AG04450 (cell line): ENCODE measurements at regions of chr13 and their contacts with region 1.

Region 1: DNA sequence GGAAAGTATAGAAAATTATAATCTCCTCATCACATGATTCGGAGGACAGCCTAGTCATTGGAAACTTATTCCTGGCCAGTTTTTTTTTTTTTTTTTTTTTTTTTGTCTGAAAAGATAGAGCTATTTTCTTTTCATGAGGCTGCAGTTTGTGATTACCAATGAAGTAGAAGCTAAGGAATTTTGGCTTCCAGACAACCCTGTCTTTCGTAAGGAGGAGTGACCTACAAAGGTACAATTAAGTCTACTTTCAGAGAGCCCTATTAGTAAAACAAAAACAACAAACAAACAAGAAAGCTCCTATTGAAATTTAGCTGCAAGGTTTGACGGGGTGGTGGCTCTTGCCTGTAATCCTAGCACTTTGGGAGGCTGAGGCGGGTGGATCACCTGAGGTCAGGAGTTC is 304.4 kb upstream of the ARGLU1 start:
- DNase-seq: no peak
- H3K4me3 ChIP-seq: no peak overlapping the region
- H3K27ac ChIP-seq: no peak overlapping the region
- H3K27me3 ChIP-seq: no peaks in the 10 kb centered on the region
- CTCF ChIP-seq: no peak

Region 2: GRCh38 chr13:106649495-106649894 is 222.8 kb before region 1 on chr13:
- CTCF ChIA-PET with region 1: interaction called, 10 read pairs
- POLR2A ChIA-PET with region 1: no interaction called
- DNase-seq: no peak
- H3K4me3 ChIP-seq: no peak overlapping the region
- H3K27ac ChIP-seq: no peak overlapping the region
- H3K27me3 ChIP-seq: no peaks in the 10 kb centered on the region
- CTCF ChIP-seq: no peak

Region 3: GRCh38 chr13:106883976-106884375 is 11.7 kb after region 1 on chr13:
- CTCF ChIA-PET with region 1: no interaction called
- POLR2A ChIA-PET with region 1: no interaction called
- DNase-seq: no peak
- H3K4me3 ChIP-seq: no peak overlapping the region
- H3K27ac ChIP-seq: no peak overlapping the region
- H3K27me3 ChIP-seq: peaks cover 2% of the 10 kb centered on the region
- CTCF ChIP-seq: no peak